H1 (cell line): ENCODE measurements at regions of chr2 and their contacts with region 1.

Region 1: DNA sequence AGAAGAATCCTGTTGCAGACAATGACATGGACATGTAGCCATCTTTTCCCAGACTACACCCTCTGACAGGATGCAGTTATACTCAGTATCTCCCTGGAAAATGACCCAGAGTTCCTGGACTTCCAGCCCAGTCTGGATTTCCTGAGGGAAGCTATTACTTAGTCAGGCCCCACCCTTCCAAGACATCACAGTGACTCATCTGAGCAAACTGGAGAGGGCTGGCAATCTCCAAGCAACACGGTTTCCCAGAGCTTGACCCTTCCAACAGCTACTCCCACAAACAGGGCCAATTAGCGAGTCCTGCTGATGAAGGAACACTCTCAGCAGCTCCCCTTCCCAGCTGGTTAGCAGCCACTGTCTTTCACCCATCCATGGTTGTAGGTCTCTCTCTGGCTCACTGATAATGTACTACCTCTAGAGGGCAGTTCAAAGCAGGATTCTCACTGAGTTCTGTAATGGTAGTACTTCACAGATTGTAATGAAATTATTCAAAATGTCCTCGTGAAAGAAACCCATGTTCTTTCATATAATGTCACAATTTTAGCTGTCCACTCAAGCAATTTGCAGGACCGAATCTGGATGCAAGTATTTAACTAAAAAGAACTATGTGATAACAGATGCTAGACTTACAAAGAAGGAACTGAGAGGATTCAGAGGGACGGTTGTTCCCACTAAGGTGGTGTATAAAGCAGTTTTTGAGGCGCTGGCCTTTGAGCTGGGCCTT is 110.2 kb downstream of the MDH1 start:
- DNase-seq: peak; percentile 51 to 53
- H3K4me3 ChIP-seq: no peak overlapping the region
- H3K27ac ChIP-seq: no peak overlapping the region
- H3K4me1 ChIP-seq: peaks cover 0 to 6% (median 2%) of the 10 kb centered on the region in 4 experiments; a peak in 3 of 7 replicates
- H3K27me3 ChIP-seq: no peaks in the 10 kb centered on the region
- CTCF ChIP-seq: peak in 2 of 3 experiments; percentile 26 to 81; a peak in 2 of 4 replicates
- EP300 ChIP-seq: no peak
- POLR2A ChIP-seq: no peak
- RAD21 ChIP-seq: peak; percentile 77 to 83

Region 2: DNA sequence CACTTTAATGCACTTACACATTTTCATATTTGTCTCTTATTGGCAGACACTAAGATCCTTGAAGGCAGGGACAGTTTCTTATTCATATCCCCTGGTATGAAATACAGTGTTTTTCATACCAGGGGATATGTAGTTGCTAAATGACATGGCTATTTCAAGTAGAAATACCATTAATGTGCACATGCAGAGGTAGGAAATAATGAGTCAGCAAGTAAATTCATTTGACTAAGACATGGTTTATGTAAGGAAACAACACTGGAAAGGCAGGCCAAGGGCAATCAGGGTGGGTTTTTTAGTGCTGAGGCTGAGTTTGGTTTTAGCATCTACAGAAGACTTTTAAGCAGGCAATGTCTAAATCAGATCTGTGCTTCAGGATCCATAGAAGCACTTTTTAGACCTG is 266.6 kb before region 1 on chr2:
- CTCF ChIA-PET with region 1: no interaction called
- POLR2A ChIA-PET with region 1: no interaction called
- DNase-seq: no peak
- H3K4me3 ChIP-seq: no peak overlapping the region
- H3K27ac ChIP-seq: no peak overlapping the region; the same call in 1 of the 2 replicates
- H3K4me1 ChIP-seq: no peaks in the 10 kb centered on the region
- H3K27me3 ChIP-seq: no peaks in the 10 kb centered on the region
- CTCF ChIP-seq: no peak
- EP300 ChIP-seq: no peak
- POLR2A ChIP-seq: no peak
- RAD21 ChIP-seq: no peak

Region 3: GRCh38 chr2:63679252-63679855 is 19.6 kb before region 1 on chr2:
- CTCF ChIA-PET with region 1: interaction called, 23 read pairs
- POLR2A ChIA-PET with region 1: no interaction called
- DNase-seq: no peak
- H3K4me3 ChIP-seq: no peak overlapping the region
- H3K27ac ChIP-seq: no peak overlapping the region
- H3K4me1 ChIP-seq: peaks cover 0 to 6% (median 2%) of the 10 kb centered on the region in 4 experiments; a peak in 3 of 7 replicates
- H3K27me3 ChIP-seq: peaks cover 0 to 1% (median 0%) of the 10 kb centered on the region in 4 experiments; a peak in 1 of 7 replicates
- CTCF ChIP-seq: no peak
- EP300 ChIP-seq: no peak
- POLR2A ChIP-seq: no peak
- RAD21 ChIP-seq: no peak

Region 4: DNA sequence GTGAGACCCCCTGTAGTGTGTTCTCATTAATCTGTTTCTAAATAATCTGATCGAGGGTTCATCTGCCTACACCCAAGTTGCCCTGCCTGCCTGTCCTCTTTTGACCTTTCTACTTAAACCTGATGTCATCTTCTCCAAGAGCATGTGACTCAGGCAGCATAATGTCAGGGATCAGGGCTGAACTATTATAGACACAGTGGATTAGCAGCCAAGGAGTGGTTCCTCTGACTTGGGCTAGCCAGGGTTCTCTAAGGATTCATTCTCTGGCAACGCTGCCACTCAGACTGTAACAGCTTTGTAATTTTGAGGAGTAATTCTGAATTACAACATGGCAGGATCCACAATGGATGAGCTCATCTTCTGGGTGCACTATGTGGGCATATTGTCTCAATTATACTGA is 13.8 kb after region 1 on chr2:
- CTCF ChIA-PET with region 1: interaction called, 29 read pairs
- POLR2A ChIA-PET with region 1: interaction called, 3 read pairs
- DNase-seq: no peak
- H3K4me3 ChIP-seq: no peak overlapping the region
- H3K27ac ChIP-seq: no peak overlapping the region
- H3K4me1 ChIP-seq: no peaks in the 10 kb centered on the region
- H3K27me3 ChIP-seq: no peaks in the 10 kb centered on the region
- CTCF ChIP-seq: no peak
- EP300 ChIP-seq: no peak
- POLR2A ChIP-seq: no peak
- RAD21 ChIP-seq: no peak

Region 5: GRCh38 chr2:63736354-63736753 is 37.4 kb after region 1 on chr2:
- CTCF ChIA-PET with region 1: no interaction called
- POLR2A ChIA-PET with region 1: no interaction called
- DNase-seq: no peak
- H3K4me3 ChIP-seq: no peak overlapping the region
- H3K27ac ChIP-seq: no peak overlapping the region
- H3K4me1 ChIP-seq: peaks cover 0 to 2% (median 0%) of the 10 kb centered on the region in 4 experiments; a peak in 1 of 7 replicates
- H3K27me3 ChIP-seq: no peaks in the 10 kb centered on the region
- CTCF ChIP-seq: no peak
- EP300 ChIP-seq: no peak
- POLR2A ChIP-seq: no peak
- RAD21 ChIP-seq: no peak

Region 6: DNA sequence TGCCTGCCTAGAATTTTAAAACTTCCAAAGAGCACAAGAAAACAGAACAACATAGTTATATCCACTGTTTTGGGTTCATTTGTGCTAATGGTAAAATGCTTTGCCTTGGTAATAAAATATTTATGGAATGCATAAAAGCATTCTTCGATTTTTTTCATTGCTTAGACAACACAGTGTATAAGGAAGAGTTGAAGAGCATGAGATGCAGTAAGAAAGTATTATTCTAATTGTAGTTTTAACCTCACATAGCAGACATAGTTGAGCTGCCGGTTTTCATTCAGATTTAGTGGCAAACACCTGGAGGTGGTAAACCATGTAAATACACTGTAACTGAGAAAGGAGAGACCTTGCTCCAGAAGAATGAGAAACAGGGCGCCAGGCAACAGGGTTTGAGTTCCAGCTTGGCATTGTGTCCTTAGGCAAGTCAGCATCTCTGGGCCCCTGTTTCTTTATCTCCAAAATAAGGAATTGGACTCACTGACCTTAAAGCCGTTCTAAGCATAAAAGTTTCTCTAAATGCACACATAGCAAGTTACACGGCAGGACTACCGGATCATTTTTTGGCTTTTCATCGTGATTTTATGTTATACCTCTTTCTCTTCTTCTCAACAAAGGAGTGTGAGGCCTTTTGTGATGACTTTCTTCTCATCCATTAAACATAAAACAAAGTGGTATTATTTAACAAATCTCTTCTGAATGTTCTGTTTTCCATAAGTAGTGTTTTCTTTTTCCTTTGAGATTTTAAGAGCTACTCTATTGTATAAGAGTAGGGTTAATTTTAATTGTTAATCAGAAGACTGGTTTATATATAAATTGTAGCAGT is 150.6 kb after region 1 on chr2:
- CTCF ChIA-PET with region 1: interaction called, 31 read pairs
- POLR2A ChIA-PET with region 1: interaction called, 28 read pairs
- DNase-seq: peak in 1 of 2 experiments; percentile 58
- H3K4me3 ChIP-seq: peak overlapping the region in 3 of 4 experiments; percentile 14 to 60 (median 33); a peak in 5 of 8 replicates
- H3K27ac ChIP-seq: peak overlapping the region; percentile 76
- H3K4me1 ChIP-seq: peaks cover 18 to 60% (median 26%) of the 10 kb centered on the region in 4 experiments
- H3K27me3 ChIP-seq: no peaks in the 10 kb centered on the region
- CTCF ChIP-seq: no peak
- EP300 ChIP-seq: no peak
- POLR2A ChIP-seq: peak; percentile 25 to 79
- RAD21 ChIP-seq: no peak; a peak in 1 of 4 replicates

Region 7: GRCh38 chr2:63861220-63861822 is 162.3 kb after region 1 on chr2:
- CTCF ChIA-PET with region 1: interaction called, 21 read pairs
- POLR2A ChIA-PET with region 1: no interaction called
- DNase-seq: no peak
- H3K4me3 ChIP-seq: no peak overlapping the region
- H3K27ac ChIP-seq: no peak overlapping the region
- H3K4me1 ChIP-seq: peaks cover 0 to 22% (median 6%) of the 10 kb centered on the region in 4 experiments; a peak in 4 of 7 replicates
- H3K27me3 ChIP-seq: no peaks in the 10 kb centered on the region
- CTCF ChIP-seq: peak in 2 of 3 experiments; percentile 37; a peak in 2 of 4 replicates
- EP300 ChIP-seq: no peak
- POLR2A ChIP-seq: no peak
- RAD21 ChIP-seq: peak; percentile 69 to 71

Region 8: DNA sequence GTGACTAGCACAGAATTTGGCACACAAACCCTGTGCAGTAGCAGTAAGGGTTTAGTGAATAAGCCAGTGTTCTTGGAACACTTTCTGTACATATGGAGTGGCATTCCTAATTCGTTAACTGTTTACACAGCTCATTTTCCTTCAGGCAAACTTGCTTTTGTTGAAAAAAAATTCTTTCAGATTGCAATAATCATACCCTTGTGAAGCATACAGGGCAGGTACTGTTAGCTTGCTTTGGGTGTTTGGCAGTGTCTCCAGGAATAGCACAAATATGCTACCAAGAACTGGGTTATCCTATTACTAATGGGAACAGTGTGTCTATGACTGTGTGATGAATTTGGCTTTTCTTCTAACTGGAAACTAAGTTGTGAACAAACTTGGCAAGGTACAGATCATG is 176.1 kb after region 1 on chr2:
- CTCF ChIA-PET with region 1: interaction called, 12 read pairs
- POLR2A ChIA-PET with region 1: interaction called, 5 read pairs
- DNase-seq: no peak
- H3K4me3 ChIP-seq: no peak overlapping the region
- H3K27ac ChIP-seq: no peak overlapping the region
- H3K4me1 ChIP-seq: peaks cover 0 to 19% (median 7%) of the 10 kb centered on the region in 4 experiments; a peak in 4 of 7 replicates
- H3K27me3 ChIP-seq: no peaks in the 10 kb centered on the region
- CTCF ChIP-seq: no peak
- EP300 ChIP-seq: no peak
- POLR2A ChIP-seq: peak; percentile 11 to 76; a peak in 1 of 3 replicates
- RAD21 ChIP-seq: no peak